ENCODE measurements at regions of chr3 and their contacts with region 1.

Region 1: DNA sequence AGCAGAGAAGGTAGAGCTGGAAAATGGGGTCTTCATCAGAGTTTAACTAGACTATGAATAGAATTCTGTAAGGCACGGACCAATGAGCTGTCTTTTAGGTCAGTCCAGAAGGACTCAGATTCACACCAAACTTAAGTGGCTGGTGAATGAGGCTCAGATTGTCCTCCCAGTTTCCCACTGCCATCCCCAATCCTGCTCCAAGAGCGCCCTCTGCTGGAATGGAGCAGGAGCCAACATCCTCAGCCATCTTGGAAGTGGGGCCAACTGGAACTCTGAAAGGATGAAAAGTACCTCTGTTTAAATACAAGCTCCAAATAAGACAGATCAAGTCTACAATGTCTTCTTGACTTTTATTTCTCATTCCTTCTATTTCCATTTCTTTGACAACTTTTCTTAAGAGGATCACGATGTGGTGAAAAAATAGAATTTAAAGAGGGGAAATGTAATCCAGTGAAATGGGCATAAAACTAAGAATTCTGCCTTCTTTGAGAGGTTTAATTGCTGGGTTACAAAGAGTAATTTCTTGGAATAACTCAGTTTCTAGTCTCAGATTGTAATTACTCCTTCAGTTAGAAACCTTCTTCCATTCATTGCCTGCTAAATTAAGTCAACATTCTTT is 217.1 kb upstream of the TPRG1 start:
- DNase-seq: peak; percentile 90
- ATAC-seq: peak; percentile 61
- H3K4me3 Mint-ChIP-seq: no peak overlapping the region
- H3K27ac Mint-ChIP-seq: no peak overlapping the region
- H3K4me1 Mint-ChIP-seq: peaks cover 46% of the 10 kb centered on the region
- H3K27me3 Mint-ChIP-seq: no peaks in the 10 kb centered on the region

Region 2: GRCh38 chr3:188061133-188061532 is 893.6 kb before region 1 on chr3:
- CTCF ChIA-PET with region 1: no interaction called
- POLR2A ChIA-PET with region 1: no interaction called
- intact Hi-C with region 1: loop called in 1 of 2 experiments (anchors 10 kb)
- DNase-seq: peak; percentile 76
- ATAC-seq: peak; percentile 98
- H3K4me3 Mint-ChIP-seq: peak overlapping the region; percentile 25
- H3K27ac Mint-ChIP-seq: peak overlapping the region; percentile 77
- H3K4me1 Mint-ChIP-seq: peaks cover 35% of the 10 kb centered on the region
- H3K27me3 Mint-ChIP-seq: no peaks in the 10 kb centered on the region

Region 3: GRCh38 chr3:188320757-188321156 is 633.9 kb before region 1 on chr3:
- CTCF ChIA-PET with region 1: no interaction called
- POLR2A ChIA-PET with region 1: no interaction called
- intact Hi-C with region 1: loop called in 1 of 2 experiments (anchors 10 kb)
- DNase-seq: no peak
- ATAC-seq: no peak
- H3K4me3 Mint-ChIP-seq: no peak overlapping the region
- H3K27ac Mint-ChIP-seq: no peak overlapping the region
- H3K4me1 Mint-ChIP-seq: peaks cover 63% of the 10 kb centered on the region
- H3K27me3 Mint-ChIP-seq: peaks cover 3% of the 10 kb centered on the region

Region 4: DNA sequence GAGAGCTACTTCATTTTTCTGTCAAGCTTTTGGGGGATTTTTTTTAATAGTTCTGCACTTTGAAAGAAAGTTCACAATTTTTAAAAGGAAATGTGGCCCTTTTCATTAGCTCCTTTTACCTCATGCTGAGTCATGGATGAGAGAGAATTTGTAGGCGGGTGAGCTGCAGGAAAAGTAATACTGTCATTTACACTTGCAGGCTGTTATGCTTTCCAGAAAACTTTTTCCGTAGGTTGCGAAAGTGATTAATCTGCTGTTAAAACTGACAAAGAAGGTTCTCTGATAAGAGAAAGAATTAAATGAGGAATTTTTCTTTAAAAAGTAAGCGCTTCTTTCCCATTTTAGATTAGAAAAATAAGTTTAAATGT is 370.6 kb before region 1 on chr3:
- CTCF ChIA-PET with region 1: interaction called, 3 read pairs
- POLR2A ChIA-PET with region 1: no interaction called
- intact Hi-C with region 1: loop called (anchors 5 kb)
- DNase-seq: peak; percentile 43
- ATAC-seq: peak; percentile 60
- H3K4me3 Mint-ChIP-seq: no peak overlapping the region
- H3K27ac Mint-ChIP-seq: no peak overlapping the region
- H3K4me1 Mint-ChIP-seq: peaks cover 12% of the 10 kb centered on the region
- H3K27me3 Mint-ChIP-seq: no peaks in the 10 kb centered on the region

Region 5: GRCh38 chr3:188830893-188831292 is 123.8 kb before region 1 on chr3:
- CTCF ChIA-PET with region 1: interaction called, 19 read pairs
- POLR2A ChIA-PET with region 1: no interaction called
- intact Hi-C with region 1: loop called (anchors 2 kb)
- DNase-seq: peak; percentile 13
- ATAC-seq: no peak
- H3K4me3 Mint-ChIP-seq: no peak overlapping the region
- H3K27ac Mint-ChIP-seq: no peak overlapping the region
- H3K4me1 Mint-ChIP-seq: peaks cover 26% of the 10 kb centered on the region
- H3K27me3 Mint-ChIP-seq: no peaks in the 10 kb centered on the region

Region 6: DNA sequence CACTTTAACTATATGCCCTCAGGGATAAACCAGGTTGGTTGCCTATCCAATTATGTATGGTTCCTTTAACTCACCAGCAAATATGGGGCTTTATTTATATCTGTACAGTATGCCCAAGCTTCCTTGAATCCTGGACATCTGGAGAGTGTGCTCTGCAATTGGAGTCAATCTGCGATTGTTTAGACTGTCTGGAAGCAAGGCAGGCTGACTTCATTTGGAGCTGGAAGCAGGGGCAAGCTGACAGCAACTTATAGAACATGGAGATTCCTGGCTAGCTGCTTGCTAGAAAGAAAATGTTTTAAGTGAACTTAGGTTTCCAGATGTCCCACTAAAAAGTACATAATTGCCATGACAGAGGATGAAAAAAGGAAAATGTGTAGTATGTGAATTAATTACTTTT is 153.4 kb after region 1 on chr3:
- CTCF ChIA-PET with region 1: no interaction called
- POLR2A ChIA-PET with region 1: no interaction called
- intact Hi-C with region 1: no loop called
- DNase-seq: no peak
- ATAC-seq: no peak
- H3K4me3 Mint-ChIP-seq: no peak overlapping the region
- H3K27ac Mint-ChIP-seq: no peak overlapping the region
- H3K4me1 Mint-ChIP-seq: no peaks in the 10 kb centered on the region
- H3K27me3 Mint-ChIP-seq: peaks cover 3% of the 10 kb centered on the region

Region 7: GRCh38 chr3:189195302-189195701 is 240.6 kb after region 1 on chr3:
- CTCF ChIA-PET with region 1: no interaction called
- POLR2A ChIA-PET with region 1: no interaction called
- intact Hi-C with region 1: no loop called
- DNase-seq: peak; percentile 24
- ATAC-seq: peak; percentile 49
- H3K4me3 Mint-ChIP-seq: no peak overlapping the region
- H3K27ac Mint-ChIP-seq: no peak overlapping the region
- H3K4me1 Mint-ChIP-seq: no peaks in the 10 kb centered on the region
- H3K27me3 Mint-ChIP-seq: peaks cover 2% of the 10 kb centered on the region

Region 8: GRCh38 chr3:189316242-189317019 is 361.7 kb after region 1 on chr3:
- CTCF ChIA-PET with region 1: no interaction called
- POLR2A ChIA-PET with region 1: no interaction called
- intact Hi-C with region 1: no loop called
- DNase-seq: no peak
- ATAC-seq: no peak
- H3K4me3 Mint-ChIP-seq: no peak overlapping the region
- H3K27ac Mint-ChIP-seq: peak overlapping the region; percentile 40
- H3K4me1 Mint-ChIP-seq: peaks cover 40% of the 10 kb centered on the region
- H3K27me3 Mint-ChIP-seq: no peaks in the 10 kb centered on the region

Region 9: GRCh38 chr3:189557824-189558223 is 603.1 kb after region 1 on chr3:
- CTCF ChIA-PET with region 1: no interaction called
- POLR2A ChIA-PET with region 1: no interaction called
- intact Hi-C with region 1: no loop called
- DNase-seq: no peak
- ATAC-seq: no peak
- H3K4me3 Mint-ChIP-seq: no peak overlapping the region
- H3K27ac Mint-ChIP-seq: no peak overlapping the region
- H3K4me1 Mint-ChIP-seq: no peaks in the 10 kb centered on the region
- H3K27me3 Mint-ChIP-seq: peaks cover 3% of the 10 kb centered on the region

Measured in activated CD4-positive, alpha-beta T cell treated with anti-CD3 and anti-CD28 coated beads for 36 hours (primary cell).